GM12878 (cell line): ENCODE measurements at regions of chr20 and their contacts with region 1.

Region 1: GRCh38 chr20:62793912-62794724 is 2.2 kb upstream of the MRGBP start:
- DNase-seq: peak; percentile 79
- ATAC-seq: peak; percentile 89
- H3K4me3 ChIP-seq: peak overlapping the region; percentile 76
- H3K27ac ChIP-seq: peak overlapping the region; percentile 71
- H3K4me1 ChIP-seq: peaks cover 19% of the 10 kb centered on the region
- H3K27me3 ChIP-seq: peaks cover 0 to 1% of the 10 kb centered on the region in 2 experiments; a peak in 2 of 4 replicates
- CTCF ChIP-seq: no peak
- EP300 ChIP-seq: no peak
- POLR2A ChIP-seq: peak; percentile 89
- RAD21 ChIP-seq: no peak

Region 2: GRCh38 chr20:62407221-62407992 is 386.7 kb before region 1 on chr20 and contains the start of gene CABLES2:
- CTCF ChIA-PET with region 1: interaction called, 9 read pairs
- POLR2A ChIA-PET with region 1: no interaction called
- RAD21 ChIA-PET with region 1: interaction called, 6 read pairs
- SMC1A ChIA-PET with region 1: interaction called, 3 read pairs
- in situ Hi-C with region 1: no loop called
- intact Hi-C with region 1: loop called (anchors 5 kb)
- DNase-seq: peak; percentile 58
- ATAC-seq: peak; percentile 94
- H3K4me3 ChIP-seq: peak within 1 kb of the TSS; percentile 73
- H3K27ac ChIP-seq: peak within 1 kb of the TSS; percentile 85
- H3K4me1 ChIP-seq: peaks cover 12% of the 10 kb centered on the region
- H3K27me3 ChIP-seq: no peaks in the 10 kb centered on the region
- CTCF ChIP-seq: peak in 1 of 3 experiments; percentile 10; a peak in 1 of 6 replicates
- EP300 ChIP-seq: no peak
- POLR2A ChIP-seq: peak; percentile 57; the same call in 1 of the 2 replicates
- RAD21 ChIP-seq: no peak
- polyA plus RNA-seq, gene CABLES2: 2.3 to 2.9 TPM

Region 3: GRCh38 chr20:62616728-62617621 is 177.1 kb before region 1 on chr20:
- CTCF ChIA-PET with region 1: interaction called, 19 read pairs
- POLR2A ChIA-PET with region 1: interaction called, 5 read pairs
- RAD21 ChIA-PET with region 1: interaction called, 6 read pairs
- SMC1A ChIA-PET with region 1: interaction called, 14 read pairs
- in situ Hi-C with region 1: loop called (anchors 5 kb)
- intact Hi-C with region 1: loop called (anchors 2 kb)
- DNase-seq: no peak
- ATAC-seq: peak; percentile 90
- H3K4me3 ChIP-seq: no peak overlapping the region
- H3K27ac ChIP-seq: 0 out of 2 replicates have a peak overlapping the region, but pooled peaks have one; percentile 67
- H3K4me1 ChIP-seq: peaks cover 28% of the 10 kb centered on the region
- H3K27me3 ChIP-seq: no peaks in the 10 kb centered on the region; a peak in 1 of 4 replicates
- CTCF ChIP-seq: peak; percentile 96 to 99 (median 97); a peak in 5 of 6 replicates
- EP300 ChIP-seq: no peak
- POLR2A ChIP-seq: no peak
- RAD21 ChIP-seq: peak; percentile 89

Region 4: GRCh38 chr20:62642040-62642665 is 152.0 kb before region 1 on chr20 and contains the start of gene SLCO4A1:
- CTCF ChIA-PET with region 1: interaction called, 9 read pairs
- POLR2A ChIA-PET with region 1: interaction called, 19 read pairs
- RAD21 ChIA-PET with region 1: interaction called, 4 read pairs
- SMC1A ChIA-PET with region 1: interaction called, 3 read pairs
- in situ Hi-C with region 1: no loop called
- intact Hi-C with region 1: no loop called
- DNase-seq: no peak
- ATAC-seq: peak; percentile 86
- H3K4me3 ChIP-seq: peak within 1 kb of the TSS; percentile 68
- H3K27ac ChIP-seq: peak within 1 kb of the TSS; percentile 46
- H3K4me1 ChIP-seq: peaks cover 34% of the 10 kb centered on the region
- H3K27me3 ChIP-seq: peaks cover 0 to 3% of the 10 kb centered on the region in 2 experiments; a peak in 1 of 4 replicates
- CTCF ChIP-seq: no peak
- EP300 ChIP-seq: no peak
- POLR2A ChIP-seq: peak; percentile 81
- RAD21 ChIP-seq: no peak
- polyA plus RNA-seq, gene SLCO4A1: 2.1 to 4.7 TPM

Region 5: DNA sequence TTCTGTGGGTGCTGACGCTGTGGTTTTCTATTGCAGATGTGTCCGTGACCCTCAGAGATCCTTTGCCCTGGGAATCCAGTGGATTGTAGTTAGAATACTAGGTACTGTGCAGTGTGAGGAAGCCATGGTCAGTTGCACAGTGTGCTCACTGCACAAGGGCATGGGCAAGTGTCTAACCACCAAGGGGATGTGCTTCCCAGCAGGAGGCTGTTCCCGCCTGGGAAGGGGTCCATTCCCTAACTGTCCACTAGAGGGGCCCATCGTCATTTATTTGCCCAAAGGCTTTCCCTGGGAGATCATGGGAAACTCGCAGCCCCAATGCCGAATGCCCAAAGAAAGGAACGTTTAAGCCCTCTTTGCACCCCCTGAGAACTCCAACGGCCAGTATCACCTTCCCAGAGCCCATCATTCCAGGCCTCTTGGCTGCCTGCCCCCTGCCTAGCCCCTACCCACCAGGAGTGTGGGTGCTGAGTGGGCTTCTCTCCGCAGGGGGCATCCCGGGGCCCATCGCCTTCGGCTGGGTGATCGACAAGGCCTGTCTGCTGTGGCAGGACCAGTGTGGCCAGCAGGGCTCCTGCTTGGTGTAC is 125.6 kb before region 1 on chr20:
- CTCF ChIA-PET with region 1: interaction called, 5 read pairs
- POLR2A ChIA-PET with region 1: no interaction called
- RAD21 ChIA-PET with region 1: interaction called, 3 read pairs
- SMC1A ChIA-PET with region 1: no interaction called
- in situ Hi-C with region 1: no loop called
- intact Hi-C with region 1: loop called (anchors 1 kb)
- DNase-seq: no peak
- ATAC-seq: peak; percentile 59
- H3K4me3 ChIP-seq: no peak overlapping the region
- H3K27ac ChIP-seq: no peak overlapping the region
- H3K4me1 ChIP-seq: no peaks in the 10 kb centered on the region
- H3K27me3 ChIP-seq: no peaks in the 10 kb centered on the region
- CTCF ChIP-seq: peak; percentile 60 to 79 (median 67)
- EP300 ChIP-seq: no peak
- POLR2A ChIP-seq: no peak
- RAD21 ChIP-seq: peak; percentile 73